ENCODE measurements at regions of chr2 and their contacts with region 1.

Region 1: DNA sequence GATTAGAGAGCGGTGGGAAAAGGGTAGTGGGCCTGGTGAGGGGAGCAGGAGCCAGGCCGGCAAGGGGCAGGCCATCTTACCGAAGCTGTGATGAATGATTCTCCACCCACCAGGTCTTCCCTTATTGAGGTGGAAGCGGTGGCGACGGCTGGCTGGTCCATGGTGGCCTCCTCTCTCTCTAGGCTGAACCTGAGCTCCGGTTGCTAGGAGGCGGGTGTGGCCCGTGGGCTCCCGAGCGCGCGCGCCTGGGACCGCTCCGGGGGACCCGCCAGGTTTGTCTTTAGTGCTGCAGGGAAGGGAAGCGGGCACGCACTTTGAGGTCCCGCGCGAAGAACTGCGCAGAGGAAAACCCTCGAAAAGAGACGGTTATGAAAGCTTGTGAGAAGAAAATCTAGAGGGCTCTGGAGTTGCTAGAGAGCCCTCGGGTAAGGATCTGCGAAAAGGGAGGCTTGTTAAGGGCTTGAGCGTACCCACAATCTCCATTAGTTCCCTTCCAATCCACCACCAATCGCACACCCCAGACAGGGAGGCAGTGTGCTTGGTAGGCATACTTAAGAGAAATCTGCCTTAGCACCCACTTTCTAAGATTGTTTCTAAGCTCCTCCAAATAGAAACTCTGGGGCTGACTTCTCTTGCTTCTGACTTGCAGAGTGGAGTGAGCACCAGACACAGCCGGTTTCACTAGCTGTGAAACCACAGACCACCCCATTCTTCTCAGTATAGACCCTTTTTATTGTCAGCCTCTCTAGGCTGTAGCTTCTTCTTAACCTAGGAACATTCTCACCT is at the start of gene STPG4:
- DNase-seq: no peak
- ATAC-seq: peak; percentile 24
- H3K4me3 ChIP-seq: no peak within 1 kb of the TSS
- H3K27ac ChIP-seq: no peak within 1 kb of the TSS
- H3K4me1 ChIP-seq: no peaks in the 10 kb centered on the region
- H3K27me3 ChIP-seq: no peaks in the 10 kb centered on the region
- CTCF ChIP-seq: no peak
- POLR2A ChIP-seq: no peak
- RAD21 ChIP-seq: no peak
- total RNA-seq, gene STPG4: 0.18 and 0.28 TPM in 2 replicates

Region 2: GRCh38 chr2:46984642-46985476 is 170.4 kb before region 1 on chr2:
- CTCF ChIA-PET with region 1: no interaction called
- POLR2A ChIA-PET with region 1: no interaction called
- dilution Hi-C with region 1: no loop called
- in situ Hi-C with region 1: loop called (anchors 10 kb)
- intact Hi-C with region 1: no loop called
- DNase-seq: peak; percentile 97
- ATAC-seq: peak; percentile 75
- H3K4me3 ChIP-seq: no peak overlapping the region
- H3K27ac ChIP-seq: peak overlapping the region; percentile 82
- H3K4me1 ChIP-seq: peaks cover 47% of the 10 kb centered on the region
- H3K27me3 ChIP-seq: no peaks in the 10 kb centered on the region
- CTCF ChIP-seq: no peak
- POLR2A ChIP-seq: peak; percentile 50; the same call in 1 of the 2 replicates
- RAD21 ChIP-seq: no peak; the same call in 1 of the 2 replicates

Region 3: GRCh38 chr2:47119001-47119400 is 36.3 kb before region 1 on chr2:
- CTCF ChIA-PET with region 1: no interaction called
- POLR2A ChIA-PET with region 1: no interaction called
- dilution Hi-C with region 1: no loop called
- in situ Hi-C with region 1: no loop called
- intact Hi-C with region 1: loop called (anchors 5 kb)
- DNase-seq: peak; percentile 89
- ATAC-seq: peak; percentile 82
- H3K4me3 ChIP-seq: no peak overlapping the region
- H3K27ac ChIP-seq: peak overlapping the region; percentile 54
- H3K4me1 ChIP-seq: peaks cover 8% of the 10 kb centered on the region
- H3K27me3 ChIP-seq: no peaks in the 10 kb centered on the region
- CTCF ChIP-seq: no peak
- POLR2A ChIP-seq: no peak
- RAD21 ChIP-seq: 0 out of 2 replicates have a peak, but pooled peaks have one; percentile 21